H1 (cell line): ENCODE measurements at regions of chr18 and their contacts with region 1.

Region 1: GRCh38 chr18:55439056-55439455 is 148.9 kb downstream of the TCF4 start:
- DNase-seq: peak; percentile 56 to 60
- H3K4me3 ChIP-seq: peak overlapping the region in 2 of 4 experiments; percentile 18 to 40; a peak in 2 of 8 replicates
- H3K27ac ChIP-seq: peak overlapping the region; percentile 61; the same call in 1 of the 2 replicates
- H3K4me1 ChIP-seq: peaks cover 4 to 25% (median 19%) of the 10 kb centered on the region in 4 experiments
- H3K27me3 ChIP-seq: no peaks in the 10 kb centered on the region
- CTCF ChIP-seq: no peak
- EP300 ChIP-seq: no peak
- POLR2A ChIP-seq: 0 out of 3 replicates have a peak, but pooled peaks of 1 of the 2 experiments have one; percentile 26
- RAD21 ChIP-seq: 0 out of 4 replicates have a peak, but pooled peaks of 1 of the 2 experiments have one; percentile 5

Region 2: DNA sequence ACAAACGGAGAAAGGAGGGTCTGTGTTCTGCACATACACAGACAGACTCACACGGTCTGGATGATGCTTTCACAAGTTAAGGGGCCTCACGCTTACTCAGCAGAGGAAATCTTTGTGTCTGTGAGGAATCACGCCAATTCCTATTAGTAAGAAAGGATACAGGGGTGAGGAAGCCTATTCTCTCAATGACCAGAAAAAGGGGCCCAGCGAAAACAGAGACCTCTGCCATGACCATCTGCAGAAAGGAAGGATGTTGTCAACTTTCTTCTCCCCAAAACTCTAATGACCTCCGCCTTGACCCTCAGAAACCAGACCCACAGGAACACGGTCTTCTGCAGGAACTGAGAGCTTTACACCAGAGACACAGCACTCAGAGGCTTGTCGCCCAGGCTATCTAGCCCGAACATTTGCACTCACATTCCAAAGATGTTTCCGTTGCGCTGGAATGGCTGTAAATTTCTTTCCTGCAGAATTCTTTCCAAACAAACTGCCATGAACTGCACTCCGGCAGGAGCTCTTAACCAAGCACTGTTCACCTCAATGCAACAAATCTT is 37.3 kb before region 1 on chr18:
- CTCF ChIA-PET with region 1: no interaction called
- POLR2A ChIA-PET with region 1: no interaction called
- DNase-seq: no peak
- H3K4me3 ChIP-seq: peak overlapping the region in 1 of 4 experiments; percentile 35; a peak in 3 of 8 replicates
- H3K27ac ChIP-seq: peak overlapping the region; percentile 3; the same call in 1 of the 2 replicates
- H3K4me1 ChIP-seq: peaks cover 3 to 26% (median 18%) of the 10 kb centered on the region in 4 experiments; a peak in 5 of 7 replicates
- H3K27me3 ChIP-seq: no peaks in the 10 kb centered on the region
- CTCF ChIP-seq: no peak
- EP300 ChIP-seq: no peak
- POLR2A ChIP-seq: 0 out of 3 replicates have a peak, but pooled peaks of 1 of the 2 experiments have one; percentile 9
- RAD21 ChIP-seq: no peak

Region 3: DNA sequence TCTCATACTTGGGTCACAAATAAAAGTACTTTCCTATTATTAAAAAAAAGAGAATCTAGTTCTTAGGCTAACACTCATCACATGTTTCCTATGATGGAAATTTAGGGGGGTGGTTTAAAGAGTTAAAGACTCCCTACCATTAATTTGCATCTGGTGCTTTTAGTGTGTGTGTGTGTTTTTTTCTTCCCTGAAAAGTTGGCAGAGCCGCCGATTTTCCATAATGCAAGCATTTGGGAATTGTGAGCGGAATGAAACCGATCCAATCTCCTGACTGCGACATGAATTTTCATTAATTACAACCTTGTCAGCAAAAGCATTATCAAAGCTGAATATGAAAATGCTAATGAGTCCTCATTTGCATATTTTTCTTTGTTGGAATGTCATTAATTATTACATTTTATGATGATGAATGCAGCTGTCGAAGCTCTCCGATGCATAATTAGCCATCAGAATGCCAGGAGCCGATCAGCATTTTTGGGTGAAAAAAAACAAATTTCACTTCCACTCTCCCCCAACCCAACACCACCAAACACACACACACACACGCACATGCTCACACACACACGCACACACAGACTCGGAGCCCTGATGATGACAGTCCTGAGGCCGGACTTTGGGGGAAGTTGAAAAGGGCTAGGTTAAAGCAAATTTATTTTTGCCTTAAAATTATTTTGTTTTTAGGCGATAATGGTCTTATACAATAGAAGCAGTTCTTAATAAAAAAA is 16.4 kb before region 1 on chr18:
- CTCF ChIA-PET with region 1: interaction called, 16 read pairs
- POLR2A ChIA-PET with region 1: interaction called, 4 read pairs
- DNase-seq: no peak
- H3K4me3 ChIP-seq: no peak overlapping the region
- H3K27ac ChIP-seq: no peak overlapping the region
- H3K4me1 ChIP-seq: peaks cover 8 to 37% (median 21%) of the 10 kb centered on the region in 4 experiments
- H3K27me3 ChIP-seq: no peaks in the 10 kb centered on the region
- CTCF ChIP-seq: no peak
- EP300 ChIP-seq: no peak
- POLR2A ChIP-seq: no peak
- RAD21 ChIP-seq: no peak

Region 4: DNA sequence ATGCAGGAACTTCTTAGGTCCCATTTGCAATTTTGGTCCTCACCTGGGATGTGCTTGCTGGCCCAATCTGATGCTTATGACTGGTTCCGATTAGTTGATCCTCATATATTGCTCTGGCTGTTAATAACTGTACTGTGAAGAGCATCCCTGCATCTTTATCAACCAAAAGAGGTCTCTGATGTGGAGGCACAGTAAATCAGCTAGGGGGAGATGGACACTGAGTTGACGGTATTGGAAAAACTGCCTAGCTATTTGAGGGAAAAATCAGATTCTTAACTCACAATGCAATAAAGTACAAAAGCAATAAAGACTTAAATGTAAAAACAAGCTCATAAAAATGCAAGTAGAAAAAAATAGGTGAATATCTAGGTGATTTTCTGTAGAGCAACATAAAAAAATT is 336.9 kb after region 1 on chr18:
- CTCF ChIA-PET with region 1: no interaction called
- POLR2A ChIA-PET with region 1: no interaction called
- DNase-seq: no peak
- H3K4me3 ChIP-seq: no peak overlapping the region
- H3K27ac ChIP-seq: no peak overlapping the region
- H3K4me1 ChIP-seq: peaks cover 0 to 11% (median 3%) of the 10 kb centered on the region in 4 experiments; a peak in 6 of 7 replicates
- H3K27me3 ChIP-seq: peaks cover 0 to 7% (median 2%) of the 10 kb centered on the region in 4 experiments; a peak in 3 of 7 replicates
- CTCF ChIP-seq: peak in 1 of 3 experiments; percentile 22; a peak in 1 of 4 replicates
- EP300 ChIP-seq: no peak
- POLR2A ChIP-seq: no peak
- RAD21 ChIP-seq: peak in 1 of 2 experiments; percentile 16; a peak in 2 of 4 replicates